Activated naive CD4-positive, alpha-beta T cell treated with anti-CD3 and anti-CD28 coated beads for 36 hours (primary cell): ENCODE measurements at regions of chr7 and their contacts with region 1.

Region 1: DNA sequence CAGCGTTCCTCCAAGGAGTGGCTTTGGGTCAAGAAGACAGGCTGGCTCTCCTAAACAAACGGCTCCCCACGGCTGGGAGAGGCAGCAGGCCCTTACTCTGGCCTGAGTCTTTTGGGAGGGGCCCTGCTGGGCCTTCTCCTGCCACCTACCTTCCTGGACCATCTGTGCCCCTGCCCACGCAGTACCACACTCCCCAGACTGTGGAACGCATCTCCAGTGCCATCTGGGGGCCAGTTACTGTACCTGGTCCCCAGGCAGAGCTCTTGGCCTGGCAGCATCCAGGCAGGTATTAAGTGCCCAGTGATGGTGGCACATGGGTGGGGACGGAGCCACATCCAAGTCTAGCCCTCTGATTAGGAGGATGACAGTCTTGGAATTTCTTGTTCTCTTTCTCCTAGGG is 14.4 kb downstream of the ALKBH4 start:
- DNase-seq: peak; percentile 63
- H3K4me3 Mint-ChIP-seq: no peak overlapping the region
- H3K27ac Mint-ChIP-seq: no peak overlapping the region
- H3K4me1 Mint-ChIP-seq: no peaks in the 10 kb centered on the region
- H3K27me3 Mint-ChIP-seq: no peaks in the 10 kb centered on the region

Region 2: GRCh38 chr7:102279537-102280400 is 170.5 kb before region 1 on chr7:
- CTCF ChIA-PET with region 1: no interaction called
- intact Hi-C with region 1: loop called (anchors 1 kb)
- DNase-seq: peak; percentile 70
- H3K4me3 Mint-ChIP-seq: no peak overlapping the region
- H3K27ac Mint-ChIP-seq: no peak overlapping the region
- H3K4me1 Mint-ChIP-seq: peaks cover 13% of the 10 kb centered on the region
- H3K27me3 Mint-ChIP-seq: peaks cover 4% of the 10 kb centered on the region

Region 3: DNA sequence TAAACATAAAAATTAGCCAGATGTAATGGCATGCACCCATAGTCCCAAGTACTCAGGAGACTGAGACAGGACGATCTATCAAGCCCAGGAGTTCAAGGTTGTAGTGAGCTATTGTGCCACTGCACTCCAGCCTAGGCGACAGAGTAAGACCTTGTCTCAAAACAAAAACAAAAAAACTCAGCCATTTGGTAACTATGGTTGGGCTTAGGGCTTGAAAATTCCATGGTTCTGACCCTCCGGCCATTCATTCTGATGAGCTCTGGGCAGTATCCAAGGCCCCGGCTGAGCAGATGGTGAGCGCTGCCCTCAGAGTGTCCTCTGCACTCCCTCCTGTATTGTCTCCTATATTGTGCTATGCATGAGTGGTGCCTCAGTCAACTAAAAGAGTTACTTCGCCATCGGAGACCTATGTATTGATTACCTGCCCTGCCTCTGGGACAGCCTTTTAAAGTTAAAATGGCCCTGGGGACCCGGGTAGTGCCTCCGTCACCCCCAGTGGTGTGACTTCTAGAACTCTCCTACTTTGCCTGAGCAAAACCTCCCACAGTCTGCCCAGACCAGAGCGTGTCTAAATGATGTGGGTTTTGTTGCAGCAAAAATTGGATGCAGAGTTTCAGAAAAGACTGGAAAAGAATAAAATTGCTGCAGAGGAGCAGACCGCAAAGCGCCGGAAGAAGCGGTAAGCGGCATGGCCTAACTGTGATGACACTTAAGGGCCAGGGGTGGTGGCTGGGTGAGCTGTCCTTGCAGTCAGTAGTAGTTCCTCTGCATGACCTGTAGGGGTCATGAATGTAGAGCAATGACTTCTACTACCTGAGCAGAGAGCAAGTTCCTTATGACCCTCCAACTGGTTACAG is 46.0 kb before region 1 on chr7:
- CTCF ChIA-PET with region 1: interaction called, 16 read pairs
- intact Hi-C with region 1: loop called (anchors 1 kb)
- DNase-seq: peak; percentile 51
- H3K4me3 Mint-ChIP-seq: no peak overlapping the region
- H3K27ac Mint-ChIP-seq: no peak overlapping the region
- H3K4me1 Mint-ChIP-seq: peaks cover 4% of the 10 kb centered on the region
- H3K27me3 Mint-ChIP-seq: no peaks in the 10 kb centered on the region

Region 4: DNA sequence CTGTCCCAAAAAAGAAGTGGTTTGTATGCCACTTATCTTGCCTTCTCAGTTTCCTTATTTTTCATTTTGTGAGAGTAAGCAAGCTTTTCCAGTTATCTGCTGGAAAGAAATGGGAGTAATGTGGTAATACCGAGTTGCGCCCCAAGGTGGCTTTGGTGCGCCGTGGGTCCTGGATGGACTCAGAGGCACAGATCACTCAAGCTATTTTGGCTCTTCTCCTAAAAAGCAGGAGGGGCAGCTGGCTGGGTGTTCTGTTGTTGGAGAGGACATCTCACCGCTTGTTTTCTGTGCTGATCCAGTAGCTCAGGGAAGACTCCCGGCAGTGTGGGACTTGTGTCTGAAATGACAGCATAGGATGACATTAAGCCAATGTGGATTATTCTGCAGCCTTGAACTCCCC is 37.7 kb before region 1 on chr7:
- CTCF ChIA-PET with region 1: interaction called, 12 read pairs
- intact Hi-C with region 1: loop called (anchors 1 kb)
- DNase-seq: peak; percentile 65
- H3K4me3 Mint-ChIP-seq: no peak overlapping the region
- H3K27ac Mint-ChIP-seq: no peak overlapping the region
- H3K4me1 Mint-ChIP-seq: peaks cover 40% of the 10 kb centered on the region
- H3K27me3 Mint-ChIP-seq: no peaks in the 10 kb centered on the region